ENCODE measurements at regions of chr3 and their contacts with region 1.

Region 1: GRCh38 chr3:192816351-192816750 is 89.0 kb upstream of the FGF12 start:
- DNase-seq: peak; percentile 17 to 36 (median 23)
- ATAC-seq: peak; percentile 63; the same call in 2 of the 3 replicates
- H3K4me3 ChIP-seq: no peak overlapping the region
- H3K27ac ChIP-seq: no peak overlapping the region
- H3K4me1 ChIP-seq: no peaks in the 10 kb centered on the region
- H3K27me3 ChIP-seq: peaks cover 0 to 4% of the 10 kb centered on the region in 2 experiments; a peak in 1 of 5 replicates
- CTCF ChIP-seq: peak; percentile 43 to 71 (median 58); a peak in 4 of 6 replicates
- EP300 ChIP-seq: no peak
- POLR2A ChIP-seq: no peak
- RAD21 ChIP-seq: peak; percentile 78 to 79

Region 2: DNA sequence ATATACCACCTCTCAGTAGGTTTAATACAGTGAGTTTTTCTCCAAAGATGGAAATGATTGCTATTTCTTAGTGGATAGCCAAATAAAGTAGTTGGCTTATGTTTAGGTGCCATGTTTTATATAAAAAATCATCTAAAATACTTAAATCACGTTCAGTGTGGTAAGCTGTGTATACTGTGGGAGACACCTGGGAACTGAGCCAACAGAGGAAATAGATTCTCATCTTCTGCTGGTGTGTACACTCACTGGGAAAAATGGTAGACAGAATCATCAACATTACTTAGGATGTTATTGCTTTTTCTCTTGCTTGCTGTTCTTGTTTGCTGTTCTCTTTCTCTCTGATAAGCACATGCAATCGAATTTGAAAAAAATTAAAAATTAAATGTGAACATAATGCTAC is 213.9 kb after region 1 on chr3:
- CTCF ChIA-PET with region 1: no interaction called
- POLR2A ChIA-PET with region 1: no interaction called
- in situ Hi-C with region 1: no loop called
- intact Hi-C with region 1: no loop called
- DNase-seq: no peak
- ATAC-seq: no peak
- H3K4me3 ChIP-seq: no peak overlapping the region
- H3K27ac ChIP-seq: no peak overlapping the region
- H3K4me1 ChIP-seq: no peaks in the 10 kb centered on the region
- H3K27me3 ChIP-seq: no peaks in the 10 kb centered on the region
- CTCF ChIP-seq: no peak
- EP300 ChIP-seq: no peak
- POLR2A ChIP-seq: no peak
- RAD21 ChIP-seq: no peak

Region 3: DNA sequence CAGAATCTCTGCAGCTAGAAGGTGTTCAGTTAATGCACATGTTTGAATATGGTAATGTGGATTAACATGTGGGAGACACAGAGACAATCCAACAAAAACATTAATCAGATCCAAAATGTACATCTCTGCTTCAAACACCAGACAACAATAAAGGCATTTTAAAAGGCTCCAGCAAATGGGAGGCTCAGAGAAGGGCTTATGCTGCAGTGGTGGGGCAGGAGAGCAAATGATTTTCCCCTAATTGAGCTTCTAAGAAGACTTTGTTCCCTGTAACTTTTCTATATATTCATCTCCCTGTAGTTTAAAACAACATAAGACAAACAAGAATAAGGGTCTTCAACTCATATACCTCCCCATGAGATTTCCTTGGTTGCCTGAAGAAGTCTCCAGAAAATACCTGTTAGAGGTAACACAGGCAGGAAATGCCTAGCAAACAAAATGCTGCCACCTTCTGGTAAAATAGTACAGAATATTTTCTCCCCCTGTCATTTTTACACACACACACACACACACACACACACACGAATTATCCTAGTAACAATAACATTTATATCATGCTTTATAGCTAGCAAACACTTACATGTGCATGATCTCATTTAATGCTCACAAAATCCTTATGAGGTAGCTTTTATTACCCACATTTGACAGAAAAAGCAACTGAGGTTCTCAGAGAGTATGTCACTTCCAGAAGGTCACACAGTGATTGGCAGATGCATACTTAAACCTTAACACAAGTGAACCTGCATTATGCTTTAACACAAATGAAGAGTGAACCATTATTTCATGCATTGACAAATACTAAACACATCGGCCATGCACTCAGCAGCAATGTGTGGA is 224.7 kb after region 1 on chr3:
- CTCF ChIA-PET with region 1: interaction called, 10 read pairs
- POLR2A ChIA-PET with region 1: no interaction called
- in situ Hi-C with region 1: loop called (anchors 10 kb)
- intact Hi-C with region 1: loop called (anchors 1 kb)
- DNase-seq: peak; percentile 11 to 24 (median 14)
- ATAC-seq: peak; percentile 55; the same call in 2 of the 3 replicates
- H3K4me3 ChIP-seq: no peak overlapping the region
- H3K27ac ChIP-seq: no peak overlapping the region
- H3K4me1 ChIP-seq: no peaks in the 10 kb centered on the region
- H3K27me3 ChIP-seq: no peaks in the 10 kb centered on the region
- CTCF ChIP-seq: peak; percentile 10 to 47 (median 28); a peak in 2 of 6 replicates
- EP300 ChIP-seq: no peak
- POLR2A ChIP-seq: no peak
- RAD21 ChIP-seq: peak; percentile 35 to 59; a peak in 3 of 4 replicates

Region 4: DNA sequence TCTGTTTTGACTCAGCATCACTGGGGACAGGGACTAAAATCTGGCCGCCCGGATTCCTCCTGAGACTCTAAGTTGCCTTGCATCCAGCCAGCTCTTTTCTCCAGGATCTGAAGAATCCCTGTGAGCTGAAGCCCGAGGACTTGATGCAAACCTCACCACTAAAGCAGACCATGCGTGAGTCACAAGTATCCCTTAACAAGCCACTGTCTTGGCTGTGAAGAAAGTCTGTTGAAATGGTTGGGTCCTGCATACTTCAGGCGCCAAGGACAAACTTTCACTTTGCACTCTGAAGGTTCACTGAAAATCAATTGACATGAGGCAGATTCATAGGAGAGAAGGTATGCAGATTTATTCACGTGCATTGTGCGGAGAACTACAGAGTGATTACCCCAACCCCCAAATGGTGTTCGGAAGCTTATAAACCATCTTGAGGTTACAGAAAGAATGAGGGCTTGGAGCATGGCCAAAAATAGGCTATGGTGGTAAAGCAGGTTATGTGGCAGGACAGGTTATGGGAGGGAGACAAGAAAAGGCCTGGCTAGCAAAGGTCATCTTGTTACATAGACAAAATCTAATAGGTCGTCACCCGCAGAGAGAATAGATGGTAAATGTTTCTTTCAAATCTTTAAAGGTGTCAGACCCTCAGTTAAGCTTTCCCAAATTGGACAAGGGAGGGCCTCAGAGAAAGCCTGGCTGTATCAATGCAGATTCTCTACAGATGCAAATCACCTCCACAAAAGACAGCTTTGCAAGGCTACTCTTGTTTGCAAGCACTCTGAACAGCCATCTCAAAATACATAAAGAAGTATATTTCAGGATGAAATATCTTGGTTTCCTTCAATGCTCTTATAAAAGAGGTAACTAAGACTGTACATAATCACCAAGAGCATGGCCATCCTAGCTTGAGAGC is 298.3 kb after region 1 on chr3:
- CTCF ChIA-PET with region 1: no interaction called
- POLR2A ChIA-PET with region 1: no interaction called
- in situ Hi-C with region 1: no loop called
- intact Hi-C with region 1: no loop called
- DNase-seq: no peak
- ATAC-seq: no peak
- H3K4me3 ChIP-seq: no peak overlapping the region
- H3K27ac ChIP-seq: no peak overlapping the region
- H3K4me1 ChIP-seq: no peaks in the 10 kb centered on the region
- H3K27me3 ChIP-seq: no peaks in the 10 kb centered on the region
- CTCF ChIP-seq: no peak
- EP300 ChIP-seq: no peak
- POLR2A ChIP-seq: no peak
- RAD21 ChIP-seq: no peak

Region 5: DNA sequence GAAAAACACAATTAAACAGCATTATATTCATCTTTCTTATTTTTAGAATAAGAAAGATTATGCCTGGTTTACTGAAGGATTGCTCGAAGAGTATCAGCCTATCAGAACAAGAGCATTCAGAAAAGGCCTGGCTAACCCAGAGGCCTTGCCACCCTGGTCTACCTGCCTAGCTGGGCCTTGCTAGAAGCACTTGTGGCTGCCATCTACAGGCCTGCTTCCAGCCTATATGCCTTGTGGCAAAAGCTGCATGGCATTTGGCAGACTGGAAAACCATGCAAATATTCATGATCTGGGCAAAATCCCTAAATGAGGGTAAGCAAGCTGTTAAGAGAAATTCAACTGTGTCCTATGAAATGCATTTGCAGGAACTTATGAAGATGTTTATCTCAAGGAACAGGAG is 747.7 kb after region 1 on chr3:
- CTCF ChIA-PET with region 1: no interaction called
- POLR2A ChIA-PET with region 1: no interaction called
- in situ Hi-C with region 1: loop called (anchors 10 kb)
- intact Hi-C with region 1: no loop called
- DNase-seq: no peak
- ATAC-seq: no peak
- H3K4me3 ChIP-seq: no peak overlapping the region
- H3K27ac ChIP-seq: no peak overlapping the region
- H3K4me1 ChIP-seq: no peaks in the 10 kb centered on the region
- H3K27me3 ChIP-seq: peaks cover 0 to 12% of the 10 kb centered on the region in 2 experiments; a peak in 2 of 5 replicates
- CTCF ChIP-seq: peak in 2 of 3 experiments; percentile 6 to 17; a peak in 1 of 6 replicates
- EP300 ChIP-seq: no peak
- POLR2A ChIP-seq: no peak
- RAD21 ChIP-seq: no peak

Region 6: DNA sequence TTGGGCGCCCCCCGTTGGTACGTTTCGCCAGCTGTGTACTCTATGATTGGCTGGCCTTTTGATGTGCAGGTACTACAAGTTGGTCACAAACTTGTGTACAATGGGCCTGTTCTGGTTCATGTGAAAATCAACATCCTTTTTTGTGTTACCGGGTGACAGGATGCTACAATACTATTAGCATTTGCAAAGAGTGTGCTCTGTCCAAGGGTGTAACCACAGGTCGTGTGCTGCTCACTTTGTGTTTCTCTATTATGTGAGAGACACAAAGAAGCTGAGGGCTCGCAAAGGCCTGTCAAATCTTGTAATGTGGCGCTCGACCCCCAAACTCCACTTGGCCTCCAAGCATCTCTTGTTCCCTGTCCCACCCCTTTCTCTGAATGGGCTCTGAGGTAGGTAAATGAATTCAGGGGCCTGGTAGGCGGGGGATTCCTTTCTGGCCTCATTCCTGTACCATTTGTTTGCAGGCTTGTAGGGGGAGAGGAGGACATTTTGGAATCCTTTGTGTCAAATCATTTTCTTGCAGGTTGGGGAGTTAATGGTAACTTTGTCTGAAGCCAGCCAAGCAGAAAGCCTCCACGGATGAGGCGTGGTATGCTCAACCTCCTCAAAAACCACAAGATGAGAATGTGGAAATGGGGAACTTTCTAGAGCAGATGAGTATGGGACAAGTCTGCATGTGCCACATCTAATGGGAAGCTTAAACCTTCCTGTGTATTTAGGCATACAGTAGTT is 885.7 kb after region 1 on chr3:
- CTCF ChIA-PET with region 1: no interaction called
- POLR2A ChIA-PET with region 1: no interaction called
- in situ Hi-C with region 1: no loop called
- intact Hi-C with region 1: loop called (anchors 10 kb)
- DNase-seq: no peak
- ATAC-seq: peak; percentile 24; the same call in 1 of the 3 replicates
- H3K4me3 ChIP-seq: no peak overlapping the region
- H3K27ac ChIP-seq: no peak overlapping the region
- H3K4me1 ChIP-seq: no peaks in the 10 kb centered on the region
- H3K27me3 ChIP-seq: no peaks in the 10 kb centered on the region
- CTCF ChIP-seq: no peak
- EP300 ChIP-seq: no peak
- POLR2A ChIP-seq: 0 out of 2 replicates have a peak, but pooled peaks have one; percentile 14
- RAD21 ChIP-seq: no peak

Region 7: DNA sequence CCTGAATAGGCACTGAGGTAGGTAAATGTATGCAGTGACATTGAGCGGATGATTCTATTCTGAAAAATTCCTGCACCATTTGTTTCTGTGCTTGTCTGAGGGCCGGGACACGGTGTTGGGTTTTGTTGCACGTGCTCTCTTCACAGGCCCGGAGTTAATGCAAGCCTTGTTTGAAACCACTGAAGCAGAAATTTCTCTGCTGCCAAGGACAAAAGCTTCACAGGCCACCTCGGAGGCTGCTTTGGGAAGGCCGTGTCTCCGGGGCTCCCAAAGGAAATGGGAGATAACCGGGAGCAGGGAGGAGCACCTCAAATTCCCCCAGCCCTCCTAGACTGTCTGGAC is 956.0 kb after region 1 on chr3:
- CTCF ChIA-PET with region 1: no interaction called
- POLR2A ChIA-PET with region 1: no interaction called
- in situ Hi-C with region 1: no loop called
- intact Hi-C with region 1: loop called (anchors 10 kb)
- DNase-seq: no peak
- ATAC-seq: no peak
- H3K4me3 ChIP-seq: no peak overlapping the region
- H3K27ac ChIP-seq: no peak overlapping the region
- H3K4me1 ChIP-seq: no peaks in the 10 kb centered on the region; a peak in 2 of 5 replicates
- H3K27me3 ChIP-seq: no peaks in the 10 kb centered on the region
- CTCF ChIP-seq: no peak
- EP300 ChIP-seq: no peak
- POLR2A ChIP-seq: no peak
- RAD21 ChIP-seq: no peak